ENCODE measurements at regions of chr2 and their contacts with region 1.

Region 1: GRCh38 chr2:225660262-225661131 is 261.0 kb downstream of the NYAP2 start:
- DNase-seq: peak; percentile 63
- ATAC-seq: peak; percentile 91
- H3K4me3 ChIP-seq: no peak overlapping the region
- H3K27ac ChIP-seq: no peak overlapping the region
- H3K4me1 ChIP-seq: no peaks in the 10 kb centered on the region
- H3K27me3 ChIP-seq: peaks cover 3% of the 10 kb centered on the region
- CTCF ChIP-seq: peak; percentile 93
- POLR2A ChIP-seq: no peak
- RAD21 ChIP-seq: peak; percentile 97

Region 2: GRCh38 chr2:224778474-224778877 is 882.0 kb before region 1 on chr2:
- CTCF ChIA-PET with region 1: no interaction called
- POLR2A ChIA-PET with region 1: no interaction called
- dilution Hi-C with region 1: no loop called
- in situ Hi-C with region 1: no loop called
- intact Hi-C with region 1: loop called (anchors 5 kb)
- DNase-seq: peak; percentile 60
- ATAC-seq: peak; percentile 70; the same call in 1 of the 2 replicates
- H3K4me3 ChIP-seq: no peak overlapping the region
- H3K27ac ChIP-seq: no peak overlapping the region
- H3K4me1 ChIP-seq: 0 out of 2 replicates have a peak, but pooled peaks cover 2% of the 10 kb centered on the region
- H3K27me3 ChIP-seq: no peaks in the 10 kb centered on the region
- CTCF ChIP-seq: peak; percentile 73
- POLR2A ChIP-seq: no peak
- RAD21 ChIP-seq: peak; percentile 62

Region 3: DNA sequence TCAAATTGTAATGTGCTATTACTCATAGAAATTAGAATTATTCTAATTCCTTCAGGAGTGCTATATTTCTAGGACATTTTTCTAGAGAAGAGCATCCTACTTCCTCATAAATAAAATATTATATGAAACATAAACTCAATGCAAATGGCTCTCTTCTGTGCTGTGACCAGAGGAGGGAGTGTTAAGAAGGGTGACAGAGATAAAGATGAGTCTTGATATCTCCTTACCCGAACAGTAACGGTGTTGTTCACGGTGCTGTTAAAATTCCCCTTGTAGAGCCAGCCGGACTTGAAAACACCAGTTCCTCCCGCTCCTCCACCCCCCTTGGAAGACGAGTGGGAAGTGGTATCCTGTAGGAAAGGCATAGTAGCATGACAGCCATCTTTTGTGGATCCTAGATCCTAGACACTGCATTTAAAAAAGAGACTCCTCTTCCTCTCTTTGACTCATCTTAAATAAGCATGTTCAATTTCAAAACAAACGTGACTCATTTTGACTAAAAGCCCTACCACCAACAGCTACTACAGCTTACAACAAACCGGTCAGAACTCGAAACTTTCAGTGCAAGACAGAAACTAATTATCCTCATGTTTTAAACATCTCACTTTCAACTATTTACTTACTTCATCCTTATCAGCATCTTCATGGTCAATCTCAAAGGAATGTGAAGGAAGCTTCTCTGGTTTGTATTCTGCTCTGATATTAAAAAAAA is 774.5 kb before region 1 on chr2:
- CTCF ChIA-PET with region 1: interaction called, 3 read pairs
- POLR2A ChIA-PET with region 1: no interaction called
- dilution Hi-C with region 1: no loop called
- in situ Hi-C with region 1: no loop called
- intact Hi-C with region 1: loop called (anchors 5 kb)
- DNase-seq: peak; percentile 93
- ATAC-seq: peak; percentile 63
- H3K4me3 ChIP-seq: no peak overlapping the region
- H3K27ac ChIP-seq: peak overlapping the region; percentile 81
- H3K4me1 ChIP-seq: peaks cover 25% of the 10 kb centered on the region
- H3K27me3 ChIP-seq: no peaks in the 10 kb centered on the region
- CTCF ChIP-seq: no peak
- POLR2A ChIP-seq: no peak
- RAD21 ChIP-seq: no peak

Region 4: DNA sequence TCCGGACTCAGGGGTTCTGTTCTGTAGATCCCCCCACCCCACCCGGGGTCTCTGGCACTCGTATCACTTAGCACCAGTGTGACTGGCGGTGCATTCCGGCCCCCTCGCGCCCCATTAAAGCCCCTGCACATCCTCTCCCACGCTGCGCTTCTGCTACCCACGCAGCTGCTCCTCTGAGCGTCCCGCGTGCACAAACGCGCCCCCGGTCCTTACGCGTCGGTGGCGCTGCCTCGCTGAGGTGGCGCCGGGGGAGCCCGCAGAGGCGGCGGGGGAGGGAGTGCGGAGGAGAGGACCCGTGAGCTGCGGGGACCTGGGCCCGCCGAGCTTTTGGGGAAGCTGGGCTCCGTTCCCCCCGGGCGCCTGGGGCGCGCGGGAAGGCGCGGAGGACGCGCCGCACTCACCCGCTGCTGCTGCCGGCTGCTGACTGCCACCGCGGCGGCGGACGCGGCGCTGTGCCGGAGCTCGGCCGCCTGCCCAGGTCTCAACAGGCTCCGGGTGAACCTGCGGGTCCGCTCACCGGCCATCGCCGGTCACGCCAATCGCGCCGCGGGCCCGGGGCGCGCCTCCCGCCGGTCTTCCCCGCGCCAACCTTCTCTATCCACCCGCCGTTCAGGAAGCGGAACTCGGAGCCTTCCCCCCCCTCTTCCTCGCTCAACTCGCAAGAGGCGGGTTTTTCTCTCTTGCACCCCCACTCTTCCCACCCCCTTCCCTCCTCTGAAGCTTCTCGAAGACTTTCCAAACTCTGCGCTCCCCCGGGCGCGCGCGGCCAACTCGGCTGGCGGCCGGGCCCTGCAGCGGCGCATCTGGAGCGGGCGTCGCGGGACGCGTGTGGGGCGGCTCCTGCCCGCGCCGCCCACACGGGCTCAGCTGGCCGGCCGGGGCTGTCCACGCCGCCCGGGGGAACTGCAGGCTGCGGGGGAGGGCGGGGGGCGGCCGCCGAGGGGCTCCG is 618.4 kb before region 1 on chr2 and contains the start of gene DOCK10:
- CTCF ChIA-PET with region 1: no interaction called
- POLR2A ChIA-PET with region 1: no interaction called
- dilution Hi-C with region 1: no loop called
- in situ Hi-C with region 1: no loop called
- intact Hi-C with region 1: loop called (anchors 2 kb)
- DNase-seq: peak; percentile 69
- ATAC-seq: peak; percentile 72
- H3K4me3 ChIP-seq: peak within 1 kb of the TSS; percentile 87
- H3K27ac ChIP-seq: peak within 1 kb of the TSS; percentile 27; the same call in 1 of the 2 replicates
- H3K4me1 ChIP-seq: peaks cover 2% of the 10 kb centered on the region; the same call in 1 of the 2 replicates
- H3K27me3 ChIP-seq: no peaks in the 10 kb centered on the region
- CTCF ChIP-seq: no peak
- POLR2A ChIP-seq: peak; percentile 10; the same call in 1 of the 2 replicates
- RAD21 ChIP-seq: no peak
- total RNA-seq, gene DOCK10: 63.6 and 75.3 TPM in 2 replicates

Region 5: DNA sequence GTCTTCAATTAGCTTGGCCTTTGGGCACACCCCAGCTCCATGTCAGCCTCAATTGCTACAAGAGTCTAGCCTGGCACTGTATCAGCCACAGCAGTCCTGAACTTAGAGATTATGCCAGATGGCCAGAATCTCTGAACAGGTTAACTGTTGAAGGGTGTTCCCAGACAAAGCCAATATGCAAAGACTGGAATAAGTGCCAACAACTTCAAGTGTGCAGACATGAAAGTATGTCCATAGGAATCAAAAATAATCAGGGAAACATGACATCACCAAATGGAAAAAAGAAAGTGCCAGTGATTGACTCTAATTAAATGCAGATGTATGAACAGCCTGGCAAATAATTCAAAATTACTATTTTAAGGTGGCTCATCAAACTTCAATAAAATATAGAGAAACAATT is 519.8 kb before region 1 on chr2:
- CTCF ChIA-PET with region 1: no interaction called
- POLR2A ChIA-PET with region 1: no interaction called
- dilution Hi-C with region 1: no loop called
- in situ Hi-C with region 1: no loop called
- intact Hi-C with region 1: no loop called
- DNase-seq: no peak
- ATAC-seq: no peak
- H3K4me3 ChIP-seq: no peak overlapping the region
- H3K27ac ChIP-seq: no peak overlapping the region
- H3K4me1 ChIP-seq: no peaks in the 10 kb centered on the region
- H3K27me3 ChIP-seq: no peaks in the 10 kb centered on the region
- CTCF ChIP-seq: no peak
- POLR2A ChIP-seq: no peak
- RAD21 ChIP-seq: no peak

Region 6: DNA sequence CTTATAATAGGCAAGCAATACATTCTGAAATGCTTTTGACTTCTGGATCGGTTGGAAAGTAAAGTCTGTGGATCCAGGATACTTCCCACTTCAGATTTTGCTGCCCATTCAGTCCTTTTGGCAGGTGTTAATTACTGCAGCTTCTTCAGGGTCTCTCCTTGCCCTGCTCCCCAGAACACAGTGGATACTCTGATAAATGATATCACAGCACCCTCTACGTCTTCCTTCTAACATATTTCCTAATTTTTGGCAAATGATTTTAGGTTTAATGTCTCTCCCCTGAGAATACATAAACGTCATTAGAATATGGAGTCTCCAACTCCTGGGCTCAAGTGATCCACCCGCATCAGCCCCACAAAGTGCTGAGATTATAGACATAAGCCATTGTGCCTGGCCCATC is 11.2 kb before region 1 on chr2:
- CTCF ChIA-PET with region 1: interaction called, 21 read pairs
- POLR2A ChIA-PET with region 1: no interaction called
- dilution Hi-C with region 1: no loop called
- in situ Hi-C with region 1: no loop called
- intact Hi-C with region 1: no loop called
- DNase-seq: no peak
- ATAC-seq: no peak
- H3K4me3 ChIP-seq: no peak overlapping the region
- H3K27ac ChIP-seq: no peak overlapping the region
- H3K4me1 ChIP-seq: no peaks in the 10 kb centered on the region
- H3K27me3 ChIP-seq: peaks cover 7% of the 10 kb centered on the region
- CTCF ChIP-seq: no peak
- POLR2A ChIP-seq: no peak
- RAD21 ChIP-seq: no peak

Region 7: DNA sequence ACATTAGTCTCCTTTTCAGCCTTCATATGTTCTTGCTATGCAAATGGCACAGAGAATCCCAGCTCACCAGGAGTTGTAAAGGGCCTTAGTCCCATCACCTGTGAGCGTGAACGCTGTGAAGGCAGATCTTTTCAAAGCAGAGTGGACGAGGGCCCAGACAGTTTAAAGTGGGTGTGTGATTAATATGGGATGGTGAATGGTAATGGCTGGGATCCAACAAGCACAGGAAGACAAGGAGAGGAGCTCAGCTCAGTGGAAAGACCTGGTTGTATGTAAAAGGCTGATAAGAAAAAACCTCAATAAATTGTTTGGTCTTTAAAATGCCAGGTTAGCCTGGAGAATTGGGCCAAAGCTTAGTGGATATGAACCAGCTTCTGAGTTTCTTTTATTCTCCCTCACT is 65.2 kb after region 1 on chr2:
- CTCF ChIA-PET with region 1: no interaction called
- POLR2A ChIA-PET with region 1: no interaction called
- dilution Hi-C with region 1: no loop called
- in situ Hi-C with region 1: no loop called
- intact Hi-C with region 1: no loop called
- DNase-seq: peak; percentile 18
- ATAC-seq: no peak
- H3K4me3 ChIP-seq: no peak overlapping the region
- H3K27ac ChIP-seq: no peak overlapping the region
- H3K4me1 ChIP-seq: no peaks in the 10 kb centered on the region
- H3K27me3 ChIP-seq: no peaks in the 10 kb centered on the region
- CTCF ChIP-seq: no peak
- POLR2A ChIP-seq: no peak
- RAD21 ChIP-seq: no peak

Region 8: DNA sequence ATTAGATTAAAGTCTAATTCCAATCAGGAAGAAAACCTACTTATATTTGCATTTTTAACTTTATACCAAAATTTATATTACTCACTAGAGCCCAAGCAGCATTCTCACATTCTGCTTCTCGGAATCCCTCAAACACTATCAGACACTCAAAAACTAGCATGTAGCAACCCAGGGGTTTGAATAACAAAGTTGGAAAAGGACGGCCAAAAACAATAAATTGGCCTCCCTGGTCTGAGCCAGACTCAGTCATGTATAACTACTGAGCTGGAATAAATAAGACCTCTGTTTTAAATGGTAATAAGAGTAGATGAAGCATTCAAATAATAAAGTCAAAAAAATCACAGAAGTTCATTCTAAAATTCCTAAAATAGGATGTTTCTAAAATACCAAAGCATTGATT is 848.2 kb after region 1 on chr2:
- CTCF ChIA-PET with region 1: no interaction called
- POLR2A ChIA-PET with region 1: no interaction called
- dilution Hi-C with region 1: no loop called
- in situ Hi-C with region 1: no loop called
- intact Hi-C with region 1: no loop called
- DNase-seq: no peak
- ATAC-seq: no peak
- H3K4me3 ChIP-seq: no peak overlapping the region
- H3K27ac ChIP-seq: no peak overlapping the region
- H3K4me1 ChIP-seq: no peaks in the 10 kb centered on the region
- H3K27me3 ChIP-seq: no peaks in the 10 kb centered on the region
- CTCF ChIP-seq: no peak
- POLR2A ChIP-seq: no peak
- RAD21 ChIP-seq: no peak

Measured in IMR-90 (cell line).